A673 (cell line): ENCODE measurements at regions of chr2 and their contacts with region 1.

Region 1: GRCh38 chr2:219073413-219074129 is 12.8 kb upstream of the IHH start:
- DNase-seq: peak; percentile 77
- H3K4me3 ChIP-seq: no peak overlapping the region
- H3K27ac ChIP-seq: no peak overlapping the region
- H3K4me1 ChIP-seq: no peaks in the 10 kb centered on the region
- H3K27me3 ChIP-seq: no peaks in the 10 kb centered on the region
- CTCF ChIP-seq: peak; percentile 79

Region 2: DNA sequence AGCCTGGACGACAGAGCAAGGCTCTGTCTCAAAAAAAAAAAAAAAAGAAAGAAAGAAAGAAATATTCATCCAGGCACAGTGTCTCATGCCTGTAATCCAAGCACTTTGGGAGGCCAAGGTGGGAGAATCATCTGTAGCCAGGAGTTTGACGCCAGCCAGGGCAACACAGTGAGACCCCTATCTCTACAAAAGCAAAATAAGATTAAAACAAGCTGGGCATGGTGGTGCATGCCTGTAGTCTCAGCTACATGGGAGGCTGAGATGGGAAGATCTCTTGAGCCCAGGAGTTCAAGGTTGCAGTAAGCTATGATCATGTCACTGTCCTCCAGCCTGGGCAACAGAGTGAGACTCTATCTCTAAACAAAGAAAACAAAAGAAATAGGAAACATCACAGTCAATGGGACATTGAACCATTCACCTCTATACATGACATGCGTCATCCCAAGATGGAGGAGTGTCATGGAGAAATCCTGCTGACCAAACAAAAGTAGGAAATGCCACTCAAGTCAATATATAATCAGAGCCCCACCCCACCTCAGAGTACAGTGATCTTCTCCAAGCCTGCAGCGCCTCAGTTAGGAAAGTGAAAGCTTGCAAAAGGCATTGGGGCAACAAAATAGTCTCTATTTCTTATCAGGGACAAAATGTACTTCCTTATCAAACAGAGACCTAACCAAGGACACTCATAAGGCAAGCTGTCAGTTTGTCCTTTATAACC is 98.4 kb before region 1 on chr2:
- CTCF ChIA-PET with region 1: no interaction called
- POLR2A ChIA-PET with region 1: no interaction called
- intact Hi-C with region 1: no loop called
- DNase-seq: no peak
- H3K4me3 ChIP-seq: no peak overlapping the region
- H3K27ac ChIP-seq: no peak overlapping the region
- H3K4me1 ChIP-seq: no peaks in the 10 kb centered on the region
- H3K27me3 ChIP-seq: peaks cover 3% of the 10 kb centered on the region
- CTCF ChIP-seq: no peak

Region 3: DNA sequence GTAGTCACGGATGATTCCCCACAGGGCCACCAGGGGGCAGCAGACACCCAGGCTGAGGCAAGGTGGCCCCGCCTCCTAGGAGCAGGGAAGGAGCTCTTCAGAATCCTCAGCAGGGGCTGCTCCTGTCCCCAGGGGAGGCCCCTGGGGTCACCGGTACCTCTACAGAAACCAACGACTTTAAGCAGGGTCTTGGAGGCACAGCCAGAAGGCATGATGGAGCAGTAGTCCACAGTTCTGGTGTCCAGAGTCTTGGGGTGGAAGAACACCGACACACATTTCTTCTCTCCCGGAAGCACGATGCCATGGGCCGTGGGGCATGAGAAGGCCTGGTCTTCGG is 43.8 kb before region 1 on chr2:
- CTCF ChIA-PET with region 1: interaction called, 10 read pairs
- POLR2A ChIA-PET with region 1: no interaction called
- intact Hi-C with region 1: no loop called
- DNase-seq: peak; percentile 86
- H3K4me3 ChIP-seq: no peak overlapping the region
- H3K27ac ChIP-seq: no peak overlapping the region
- H3K4me1 ChIP-seq: no peaks in the 10 kb centered on the region
- H3K27me3 ChIP-seq: peaks cover 22% of the 10 kb centered on the region
- CTCF ChIP-seq: peak; percentile 92

Region 4: GRCh38 chr2:219104107-219105035 is 30.8 kb after region 1 on chr2:
- CTCF ChIA-PET with region 1: interaction called, 13 read pairs
- POLR2A ChIA-PET with region 1: no interaction called
- intact Hi-C with region 1: no loop called
- DNase-seq: peak; percentile 47
- H3K4me3 ChIP-seq: no peak overlapping the region
- H3K27ac ChIP-seq: no peak overlapping the region
- H3K4me1 ChIP-seq: no peaks in the 10 kb centered on the region
- H3K27me3 ChIP-seq: no peaks in the 10 kb centered on the region
- CTCF ChIP-seq: peak; percentile 86

Region 5: DNA sequence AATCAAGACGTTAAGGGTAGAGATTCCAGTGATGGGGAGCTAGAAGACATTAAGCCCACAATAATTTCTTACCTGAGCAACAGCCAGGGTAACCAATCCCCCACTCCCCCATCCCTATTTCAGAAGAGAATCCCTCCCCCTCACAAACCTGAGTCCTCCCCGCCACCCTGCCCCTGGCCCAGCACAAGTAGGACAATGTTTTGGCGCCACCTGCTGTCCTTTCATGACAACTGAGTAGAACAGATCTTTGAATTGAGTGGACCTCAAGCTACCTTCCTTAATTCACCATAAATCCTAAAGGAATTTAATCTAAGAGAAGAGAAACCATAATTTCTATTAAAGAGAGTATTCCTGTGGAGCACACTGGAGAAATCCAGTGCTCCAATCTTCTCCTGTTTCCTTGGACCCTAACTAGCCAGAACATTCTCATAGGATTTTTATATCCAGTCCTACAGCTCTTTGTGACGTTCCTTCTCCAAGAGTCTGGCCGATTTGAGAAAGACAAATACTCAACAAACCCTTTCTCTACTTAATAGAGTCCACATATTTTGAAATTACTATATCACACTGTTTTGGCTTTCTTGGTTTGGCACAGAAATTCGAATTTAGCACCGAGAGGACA is 46.0 kb after region 1 on chr2:
- CTCF ChIA-PET with region 1: interaction called, 6 read pairs
- POLR2A ChIA-PET with region 1: no interaction called
- intact Hi-C with region 1: loop called (anchors 5 kb)
- DNase-seq: peak; percentile 72
- H3K4me3 ChIP-seq: no peak overlapping the region
- H3K27ac ChIP-seq: no peak overlapping the region
- H3K4me1 ChIP-seq: peaks cover 21% of the 10 kb centered on the region
- H3K27me3 ChIP-seq: no peaks in the 10 kb centered on the region
- CTCF ChIP-seq: peak; percentile 89

Region 6: DNA sequence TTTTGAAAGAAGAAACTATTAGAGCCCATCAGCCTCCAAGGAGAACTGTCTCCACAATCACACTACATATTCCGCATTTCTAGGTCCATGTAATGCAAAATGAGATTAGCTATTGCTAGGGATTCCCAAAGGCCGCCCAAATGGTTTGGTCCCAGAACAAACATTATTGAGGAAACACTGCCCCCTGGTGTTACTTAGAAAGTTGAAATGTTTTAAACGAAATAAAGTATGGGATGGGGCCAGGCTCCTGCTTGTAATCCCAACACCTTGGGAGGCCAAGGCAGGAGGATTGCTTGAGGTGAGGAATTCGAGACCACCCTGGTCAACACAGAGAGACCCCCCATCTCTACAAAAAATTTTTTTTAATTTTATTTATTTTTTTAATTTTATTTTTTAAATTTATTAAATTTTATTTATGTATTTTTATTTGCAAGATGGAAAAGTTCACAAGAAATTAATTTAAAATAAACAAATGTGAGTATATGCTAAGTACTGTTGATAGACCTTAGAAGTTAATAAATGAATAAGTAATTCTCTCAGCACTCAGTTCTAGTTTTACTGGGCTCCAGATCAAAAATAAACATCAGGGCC is 81.6 kb after region 1 on chr2:
- CTCF ChIA-PET with region 1: interaction called, 3 read pairs
- POLR2A ChIA-PET with region 1: no interaction called
- intact Hi-C with region 1: loop called (anchors 5 kb)
- DNase-seq: peak; percentile 91
- H3K4me3 ChIP-seq: no peak overlapping the region
- H3K27ac ChIP-seq: no peak overlapping the region
- H3K4me1 ChIP-seq: peaks cover 4% of the 10 kb centered on the region
- H3K27me3 ChIP-seq: no peaks in the 10 kb centered on the region
- CTCF ChIP-seq: peak; percentile 56